Activated CD8-positive, alpha-beta memory T cell treated with anti-CD3 and anti-CD28 coated beads, Interleukin-2, amount 10 ng/mL, durations not matched to agents 7 days and 5 days (primary cell): ENCODE measurements at regions of chr21 and their contacts with region 1.

Region 1: DNA sequence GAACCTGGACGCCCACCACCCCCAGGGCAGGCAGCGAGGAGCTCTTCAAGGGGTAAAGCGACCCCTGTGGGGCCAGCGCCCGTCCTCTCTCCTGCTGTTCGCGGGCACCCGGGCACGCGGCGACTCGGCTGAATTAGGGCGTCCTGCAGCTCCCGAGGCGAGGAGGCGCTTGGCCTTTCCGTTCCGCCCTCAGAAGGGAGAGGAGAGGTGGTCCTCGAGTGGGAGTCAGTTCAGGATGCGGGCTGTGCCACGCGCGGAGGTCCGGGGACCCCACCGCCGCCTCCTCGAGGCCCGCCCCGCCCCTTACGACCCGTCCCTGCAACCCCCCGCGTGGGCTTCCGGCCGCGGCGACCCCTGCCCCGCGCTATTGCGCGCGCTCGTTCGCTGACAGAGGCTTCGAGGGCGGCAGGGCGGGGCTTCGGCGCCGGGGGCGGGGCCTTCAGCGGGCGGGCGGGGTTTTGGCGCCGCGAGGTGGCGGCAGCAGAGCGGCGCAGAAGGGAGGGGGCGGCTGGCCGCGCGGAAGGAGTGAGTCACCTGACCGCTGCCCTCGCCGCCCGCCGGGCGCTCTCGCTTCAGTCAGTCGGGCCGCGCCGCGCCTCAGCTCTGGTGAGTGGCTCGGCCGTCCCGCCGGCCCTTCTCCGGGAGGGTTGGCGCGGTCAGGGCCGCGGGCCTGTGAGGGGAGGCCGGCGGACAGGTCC is at the start of gene BACH1:
- DNase-seq: peak; percentile 89
- ATAC-seq: peak; percentile 86
- H3K4me3 Mint-ChIP-seq: peak within 1 kb of the TSS; percentile 87
- H3K27ac Mint-ChIP-seq: peak within 1 kb of the TSS; percentile 86
- H3K4me1 Mint-ChIP-seq: peaks cover 36% of the 10 kb centered on the region
- H3K27me3 Mint-ChIP-seq: peaks cover 26% of the 10 kb centered on the region
- total RNA-seq, gene BACH1: 19.1 to 22.1 TPM

Region 2: GRCh38 chr21:29077651-29078090 is 220.8 kb before region 1 on chr21:
- CTCF ChIA-PET with region 1: interaction called, 10 read pairs
- DNase-seq: peak; percentile 60
- ATAC-seq: no peak
- H3K4me3 Mint-ChIP-seq: peak overlapping the region; percentile 82
- H3K27ac Mint-ChIP-seq: peak overlapping the region; percentile 91
- H3K4me1 Mint-ChIP-seq: peaks cover 53% of the 10 kb centered on the region
- H3K27me3 Mint-ChIP-seq: no peaks in the 10 kb centered on the region